ENCODE measurements at regions of chr9 and their contacts with region 1.

Region 1: GRCh38 chr9:75200892-75201470 is 112.7 kb downstream of the OSTF1 start:
- DNase-seq: no peak
- H3K4me3 Mint-ChIP-seq: no peak overlapping the region
- H3K27ac Mint-ChIP-seq: no peak overlapping the region
- H3K4me1 Mint-ChIP-seq: peaks cover 6% of the 10 kb centered on the region
- H3K27me3 Mint-ChIP-seq: peaks cover 15% of the 10 kb centered on the region

Region 2: DNA sequence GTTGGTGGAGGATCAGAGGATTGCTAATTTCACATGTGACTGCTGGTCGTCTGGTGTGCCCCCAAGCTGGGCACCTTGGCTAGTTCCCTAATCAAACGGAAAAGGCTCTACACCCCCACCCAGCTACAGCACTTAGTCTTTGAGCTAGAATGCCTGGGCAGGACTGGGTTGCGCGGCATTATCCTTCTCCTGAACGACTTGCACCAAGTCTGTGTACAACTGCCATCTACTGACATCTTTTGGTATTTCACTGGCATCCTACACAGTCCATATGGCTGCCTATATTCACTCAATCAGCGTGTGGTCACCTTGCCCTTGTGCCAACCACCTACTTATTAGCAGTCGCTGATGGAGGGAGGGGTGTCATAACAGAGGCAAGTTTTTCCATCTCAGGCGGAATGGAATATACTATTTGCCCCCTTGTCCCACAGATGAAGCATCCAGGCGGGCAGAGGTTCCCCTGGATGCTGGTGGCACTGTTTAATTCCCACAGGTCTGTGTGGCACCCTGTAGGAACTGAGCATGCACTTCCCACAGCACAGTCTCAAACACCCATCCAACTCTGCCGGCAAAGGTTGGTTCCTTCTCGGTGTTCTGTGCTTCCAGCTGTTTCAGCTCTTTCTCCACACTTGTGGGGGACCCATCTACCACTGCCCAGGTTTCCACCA is 37.5 kb after region 1 on chr9:
- intact Hi-C with region 1: loop called (anchors 1 kb)
- DNase-seq: peak; percentile 18
- H3K4me3 Mint-ChIP-seq: no peak overlapping the region
- H3K27ac Mint-ChIP-seq: no peak overlapping the region
- H3K4me1 Mint-ChIP-seq: no peaks in the 10 kb centered on the region
- H3K27me3 Mint-ChIP-seq: peaks cover 1% of the 10 kb centered on the region

Measured in activated T-helper 2 cell treated with anti-CD3 and anti-CD28 coated beads, Interferon-gamma antibody, Interleukin-2, Interleukin-4, amounts not matched to agents 10 μg/mL and 5 μg/mL and 100 μg/mL, durations not matched to agents 14 hours and 24 hours and 36 hours (primary cell).